Ascending aorta (tissue), 2 donors: ENCODE measurements at regions of chrX and their contacts with region 1.

Region 1: DNA sequence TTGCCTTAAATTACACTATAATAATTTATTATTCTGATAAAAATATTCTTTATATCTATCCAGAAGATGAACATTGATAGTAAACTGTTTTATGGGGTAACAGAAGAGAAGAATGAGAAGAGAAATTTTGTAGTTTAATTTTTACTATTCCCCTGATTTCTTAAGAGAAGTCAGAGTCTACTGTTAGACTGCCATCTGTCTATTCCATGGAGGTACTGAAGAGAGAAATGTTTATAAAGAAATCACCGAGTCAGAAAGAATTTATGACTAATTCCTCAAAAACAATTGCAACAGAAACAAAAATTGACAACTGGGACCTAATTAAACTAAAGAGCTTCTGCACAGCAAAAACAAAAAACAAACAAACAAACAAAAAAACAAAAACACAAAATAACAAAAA is 149.9 kb downstream of the FGF16 start:
- DNase-seq: no peak
- H3K4me3 ChIP-seq: no peak overlapping the region
- H3K27ac ChIP-seq: no peak overlapping the region
- H3K4me1 ChIP-seq: no peaks in the 10 kb centered on the region
- H3K27me3 ChIP-seq: no peaks in the 10 kb centered on the region
- CTCF ChIP-seq: peak; percentile 8 to 46 (median 44)

Region 2: DNA sequence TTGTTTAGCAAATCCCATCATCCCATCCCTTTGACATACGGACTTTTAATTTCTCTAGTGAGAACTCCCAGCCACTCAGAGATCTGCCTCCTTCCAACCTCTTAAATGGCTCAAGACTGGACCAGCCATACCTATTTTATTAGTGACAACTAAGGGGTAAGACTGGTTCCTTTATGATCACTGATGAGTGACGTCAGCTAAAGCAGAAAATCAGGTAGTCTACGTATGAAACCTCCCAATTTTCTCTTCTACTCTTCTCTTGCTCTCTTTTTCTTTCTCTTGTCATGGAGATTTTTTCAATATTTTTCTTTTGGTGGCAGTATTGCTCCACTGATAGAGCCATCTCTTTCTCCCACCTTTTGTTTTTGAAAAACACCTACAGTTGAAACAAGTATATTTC is 904.6 kb before region 1 on chrX:
- intact Hi-C with region 1: loop called (anchors 5 kb)
- DNase-seq: no peak
- H3K4me3 ChIP-seq: no peak overlapping the region
- H3K27ac ChIP-seq: no peak overlapping the region
- H3K4me1 ChIP-seq: no peaks in the 10 kb centered on the region
- H3K27me3 ChIP-seq: no peaks in the 10 kb centered on the region
- CTCF ChIP-seq: no peak

Region 3: GRCh38 chrX:77556276-77556675 is 40.8 kb before region 1 on chrX:
- intact Hi-C with region 1: no loop called
- DNase-seq: no peak
- H3K4me3 ChIP-seq: no peak overlapping the region
- H3K27ac ChIP-seq: no peak overlapping the region
- H3K4me1 ChIP-seq: no peaks in the 10 kb centered on the region
- H3K27me3 ChIP-seq: no peaks in the 10 kb centered on the region
- CTCF ChIP-seq: no peak